B cell (primary cell): ENCODE measurements at regions of chr17 and their contacts with region 1.

Region 1: DNA sequence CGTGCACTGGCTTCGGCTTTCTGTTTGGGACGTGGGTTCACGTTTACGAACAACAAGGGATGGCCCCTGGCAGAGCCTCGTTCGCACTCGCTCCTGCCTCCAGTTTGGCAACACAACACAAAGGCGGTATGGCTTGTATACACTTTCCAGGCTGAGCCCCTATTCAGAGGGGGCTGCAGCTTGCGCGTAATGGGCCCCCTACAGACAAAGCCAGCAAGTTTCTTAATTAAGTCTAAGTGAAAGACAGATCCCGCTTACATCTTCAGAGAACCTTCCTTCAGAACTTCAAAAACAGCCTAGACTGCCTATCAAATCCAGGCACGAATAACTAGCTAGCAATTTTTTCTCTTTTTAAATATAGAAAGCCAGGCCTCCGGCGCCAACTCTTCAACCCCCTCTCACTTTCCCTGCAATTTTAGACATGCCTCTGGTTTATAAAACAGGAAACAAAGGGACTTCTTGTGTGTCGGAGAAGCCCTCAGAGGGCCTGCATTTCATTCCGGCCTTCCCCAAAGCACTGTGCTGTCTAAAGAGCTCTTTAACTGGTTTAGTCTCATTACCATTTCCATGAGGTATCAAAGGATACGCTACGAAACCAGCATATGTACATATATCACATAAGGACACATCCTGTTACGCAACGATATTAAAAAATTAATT is 244.9 kb downstream of the STX8 start:
- DNase-seq: no peak
- ATAC-seq: no peak
- H3K4me3 ChIP-seq: no peak overlapping the region
- H3K4me3 Mint-ChIP-seq: no peak overlapping the region
- H3K27ac ChIP-seq: no peak overlapping the region
- H3K27ac Mint-ChIP-seq: no peak overlapping the region
- H3K4me1 ChIP-seq: no peaks in the 10 kb centered on the region
- H3K4me1 Mint-ChIP-seq: no peaks in the 10 kb centered on the region
- H3K27me3 ChIP-seq: no peaks in the 10 kb centered on the region
- H3K27me3 Mint-ChIP-seq: no peaks in the 10 kb centered on the region
- CTCF ChIP-seq: no peak

Region 2: GRCh38 chr17:9306086-9306485 is 24.7 kb before region 1 on chr17:
- CTCF ChIA-PET with region 1: no interaction called
- POLR2A ChIA-PET with region 1: interaction called, 13 read pairs
- intact Hi-C with region 1: no loop called
- DNase-seq: no peak
- ATAC-seq: no peak
- H3K4me3 ChIP-seq: no peak overlapping the region
- H3K4me3 Mint-ChIP-seq: no peak overlapping the region
- H3K27ac ChIP-seq: no peak overlapping the region
- H3K27ac Mint-ChIP-seq: no peak overlapping the region
- H3K4me1 ChIP-seq: peaks cover 5% of the 10 kb centered on the region in 2 donors
- H3K4me1 Mint-ChIP-seq: peaks cover 18% of the 10 kb centered on the region
- H3K27me3 ChIP-seq: no peaks in the 10 kb centered on the region
- H3K27me3 Mint-ChIP-seq: no peaks in the 10 kb centered on the region
- CTCF ChIP-seq: no peak

Region 3: GRCh38 chr17:9361188-9361955 is 30.6 kb after region 1 on chr17:
- CTCF ChIA-PET with region 1: no interaction called
- POLR2A ChIA-PET with region 1: no interaction called
- intact Hi-C with region 1: no loop called
- DNase-seq: no peak
- ATAC-seq: no peak
- H3K4me3 ChIP-seq: no peak overlapping the region
- H3K4me3 Mint-ChIP-seq: no peak overlapping the region
- H3K27ac ChIP-seq: no peak overlapping the region
- H3K27ac Mint-ChIP-seq: no peak overlapping the region
- H3K4me1 ChIP-seq: peaks cover 3 to 9% of the 10 kb centered on the region in 2 donors
- H3K4me1 Mint-ChIP-seq: peaks cover 6% of the 10 kb centered on the region
- H3K27me3 ChIP-seq: no peaks in the 10 kb centered on the region
- H3K27me3 Mint-ChIP-seq: no peaks in the 10 kb centered on the region
- CTCF ChIP-seq: no peak